ENCODE measurements at regions of chr6 and their contacts with region 1.

Region 1: DNA sequence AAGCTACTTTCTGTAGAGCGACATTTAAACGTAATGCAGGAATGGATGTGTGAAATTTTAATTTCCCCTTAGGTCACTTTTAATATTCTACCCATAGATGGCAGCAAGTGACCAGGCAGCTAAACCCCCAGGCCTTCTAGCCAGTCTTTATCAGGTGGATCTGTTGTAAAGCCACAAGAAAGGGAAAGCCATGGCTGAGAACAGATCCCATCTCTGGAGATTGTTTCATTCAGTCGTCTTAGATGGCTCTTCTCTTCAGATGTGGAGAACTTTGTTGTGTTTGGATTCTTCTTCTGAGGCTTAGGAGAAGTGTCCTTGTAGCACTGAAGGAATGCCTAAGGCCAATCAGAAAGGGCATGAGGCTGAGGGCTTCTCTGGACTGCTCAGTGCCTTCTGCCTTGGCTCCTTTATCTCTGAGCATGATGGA is 15.8 kb upstream of the RNF182 start:
- DNase-seq: no peak
- ATAC-seq: peak; percentile 80
- H3K4me3 Mint-ChIP-seq: no peak overlapping the region
- H3K27ac Mint-ChIP-seq: no peak overlapping the region
- H3K4me1 Mint-ChIP-seq: peaks cover 5% of the 10 kb centered on the region
- H3K27me3 Mint-ChIP-seq: peaks cover 4% of the 10 kb centered on the region
- CTCF ChIP-seq: peak; percentile 91

Region 2: GRCh38 chr6:14046476-14047068 is 137.6 kb after region 1 on chr6:
- CTCF ChIA-PET with region 1: interaction called, 8 read pairs
- POLR2A ChIA-PET with region 1: no interaction called
- intact Hi-C with region 1: loop called (anchors 1 kb)
- DNase-seq: no peak
- ATAC-seq: peak; percentile 89
- H3K4me3 Mint-ChIP-seq: no peak overlapping the region
- H3K27ac Mint-ChIP-seq: no peak overlapping the region
- H3K4me1 Mint-ChIP-seq: peaks cover 5% of the 10 kb centered on the region
- H3K27me3 Mint-ChIP-seq: peaks cover 3% of the 10 kb centered on the region
- CTCF ChIP-seq: peak; percentile 20

Region 3: GRCh38 chr6:15389765-15390723 is 1481.1 kb after region 1 on chr6:
- CTCF ChIA-PET with region 1: interaction called, 6 read pairs
- POLR2A ChIA-PET with region 1: no interaction called
- intact Hi-C with region 1: loop called (anchors 2 kb)
- DNase-seq: no peak
- ATAC-seq: peak; percentile 69
- H3K4me3 Mint-ChIP-seq: peak overlapping the region; percentile 42
- H3K27ac Mint-ChIP-seq: peak overlapping the region; percentile 30
- H3K4me1 Mint-ChIP-seq: peaks cover 71% of the 10 kb centered on the region
- H3K27me3 Mint-ChIP-seq: no peaks in the 10 kb centered on the region
- CTCF ChIP-seq: no peak

Region 4: GRCh38 chr6:15464211-15464725 is 1555.3 kb after region 1 on chr6:
- CTCF ChIA-PET with region 1: no interaction called
- POLR2A ChIA-PET with region 1: no interaction called
- intact Hi-C with region 1: loop called (anchors 1 kb)
- DNase-seq: peak; percentile 24
- ATAC-seq: peak; percentile 72
- H3K4me3 Mint-ChIP-seq: no peak overlapping the region
- H3K27ac Mint-ChIP-seq: no peak overlapping the region
- H3K4me1 Mint-ChIP-seq: peaks cover 40% of the 10 kb centered on the region
- H3K27me3 Mint-ChIP-seq: no peaks in the 10 kb centered on the region
- CTCF ChIP-seq: peak; percentile 53

Region 5: DNA sequence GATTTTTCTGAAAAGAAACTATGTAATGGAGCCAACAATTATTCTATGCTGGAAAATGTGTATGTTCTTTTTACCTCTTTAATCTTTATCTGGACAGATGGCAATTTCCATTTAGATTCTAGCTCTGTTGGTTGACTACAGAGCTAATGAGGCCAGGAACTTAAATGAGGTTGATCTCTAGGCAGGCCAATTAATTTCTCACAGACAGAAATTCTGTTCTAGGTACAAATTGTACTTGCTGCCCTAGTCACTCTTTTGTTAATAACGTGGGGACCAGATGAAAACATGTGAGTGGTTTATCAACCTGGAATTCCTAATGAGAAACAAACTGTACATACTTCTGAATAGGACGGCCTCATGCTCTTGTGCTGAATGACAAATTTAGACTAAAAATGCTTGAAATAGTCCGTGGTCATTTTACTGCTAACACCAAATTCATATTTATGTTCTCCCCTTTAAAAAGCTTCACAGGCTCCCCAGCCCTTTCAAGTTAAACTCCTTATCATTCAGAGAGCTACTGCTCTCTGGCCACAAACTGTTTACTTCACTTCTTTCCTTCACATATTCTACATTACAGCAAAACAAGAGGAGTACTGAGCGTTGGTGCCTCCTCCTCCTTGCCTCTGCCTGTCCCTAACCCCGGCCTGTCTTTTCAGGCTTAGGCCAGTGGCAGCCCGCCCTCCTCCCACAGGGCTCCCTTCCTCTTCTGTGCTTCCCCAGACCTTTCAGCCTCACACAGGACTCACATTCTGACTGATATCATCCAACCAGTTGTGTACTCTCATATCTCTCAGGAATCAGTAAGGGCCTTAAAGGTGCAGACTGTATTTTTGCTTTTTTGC is 1712.5 kb after region 1 on chr6:
- CTCF ChIA-PET with region 1: interaction called, 15 read pairs
- POLR2A ChIA-PET with region 1: no interaction called
- intact Hi-C with region 1: loop called (anchors 2 kb)
- DNase-seq: no peak
- ATAC-seq: peak; percentile 79
- H3K4me3 Mint-ChIP-seq: no peak overlapping the region
- H3K27ac Mint-ChIP-seq: peak overlapping the region; percentile 38
- H3K4me1 Mint-ChIP-seq: peaks cover 34% of the 10 kb centered on the region
- H3K27me3 Mint-ChIP-seq: no peaks in the 10 kb centered on the region
- CTCF ChIP-seq: no peak